ENCODE measurements at regions of chr1 and their contacts with region 1.

Region 1: DNA sequence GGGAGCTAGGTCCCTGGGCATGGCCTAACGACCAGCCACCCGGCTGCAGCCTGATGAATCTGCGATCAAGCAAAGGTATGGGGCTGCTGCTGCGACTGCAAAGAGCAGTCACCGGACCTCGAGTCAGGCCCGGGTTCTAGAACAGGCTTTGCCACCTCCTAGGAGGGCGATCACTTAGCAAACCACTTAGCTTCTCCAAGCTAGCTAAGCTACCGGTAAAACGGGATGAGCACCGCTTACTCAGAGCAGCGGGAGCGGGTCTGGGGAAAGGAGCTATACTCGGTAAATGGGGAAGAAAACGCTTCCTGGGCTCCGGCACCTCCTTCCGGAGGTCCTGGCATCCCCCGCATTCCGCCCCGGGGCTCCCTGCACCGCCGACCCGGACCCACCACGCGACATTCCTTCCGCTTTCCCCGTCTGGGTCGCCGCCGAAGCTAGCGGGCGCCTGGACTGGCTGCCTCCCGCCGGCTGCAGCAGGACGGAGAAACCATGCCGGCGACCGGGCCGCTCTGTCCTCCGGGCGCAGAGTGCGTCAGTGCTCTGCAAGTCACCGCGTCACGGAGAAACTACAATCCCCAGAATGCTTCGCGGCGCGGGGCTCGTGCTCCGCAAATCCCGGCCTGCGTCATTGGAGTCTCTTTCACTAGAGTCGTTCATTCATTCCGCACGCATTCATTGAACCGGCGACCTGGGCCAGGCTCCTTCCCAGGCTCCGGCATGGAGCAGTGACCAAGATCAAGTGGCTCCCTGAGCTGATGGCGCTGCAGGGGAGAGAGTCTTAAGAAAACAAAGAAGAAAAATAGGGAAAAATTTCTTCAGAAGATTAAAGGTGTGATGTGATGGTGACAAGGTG is at the start of gene LSM10:
- H3K4me3 ChIP-seq: peak within 1 kb of the TSS; percentile 58
- H3K27ac ChIP-seq: peak within 1 kb of the TSS; percentile 51; the same call in 1 of the 2 replicates
- H3K4me1 ChIP-seq: no peaks in the 10 kb centered on the region
- CTCF ChIP-seq: no peak

Region 2: GRCh38 chr1:36385410-36386257 is 12.0 kb before region 1 on chr1 and contains the start of gene STK40:
- CTCF ChIA-PET with region 1: interaction called, 5 read pairs
- POLR2A ChIA-PET with region 1: interaction called, 103 read pairs
- H3K4me3 ChIP-seq: peak within 1 kb of the TSS; percentile 81
- H3K27ac ChIP-seq: peak within 1 kb of the TSS; percentile 78
- H3K4me1 ChIP-seq: peaks cover 3% of the 10 kb centered on the region
- CTCF ChIP-seq: no peak

Region 3: GRCh38 chr1:36411674-36412520 is 14.3 kb after region 1 on chr1:
- CTCF ChIA-PET with region 1: no interaction called
- POLR2A ChIA-PET with region 1: interaction called, 15 read pairs
- H3K4me3 ChIP-seq: no peak overlapping the region
- H3K27ac ChIP-seq: no peak overlapping the region
- H3K4me1 ChIP-seq: no peaks in the 10 kb centered on the region
- CTCF ChIP-seq: no peak